Tibial artery (tissue), 4 donors: ENCODE measurements at regions of chr3 and their contacts with region 1.

Region 1: GRCh38 chr3:39907981-39908380 is 98.6 kb downstream of the MYRIP start:
- DNase-seq: no peak
- H3K4me3 ChIP-seq: no peak overlapping the region
- H3K27ac ChIP-seq: no peak overlapping the region
- H3K4me1 ChIP-seq: peaks cover 0 to 46% (median 21%) of the 10 kb centered on the region in 4 donors
- H3K27me3 ChIP-seq: no peaks in the 10 kb centered on the region
- CTCF ChIP-seq: no peak

Region 2: GRCh38 chr3:39668420-39668819 is 239.6 kb before region 1 on chr3:
- intact Hi-C with region 1: no loop called
- DNase-seq: no peak
- H3K4me3 ChIP-seq: no peak overlapping the region
- H3K27ac ChIP-seq: no peak overlapping the region
- H3K4me1 ChIP-seq: no peaks in the 10 kb centered on the region
- H3K27me3 ChIP-seq: peaks cover 0 to 3% of the 10 kb centered on the region in 2 donors
- CTCF ChIP-seq: peak in 1 of 2 experiments; percentile 32

Region 3: GRCh38 chr3:39855517-39855916 is 52.5 kb before region 1 on chr3:
- intact Hi-C with region 1: loop called (anchors 5 kb)
- DNase-seq: no peak
- H3K4me3 ChIP-seq: no peak overlapping the region
- H3K27ac ChIP-seq: no peak overlapping the region
- H3K4me1 ChIP-seq: peaks cover 0 to 6% (median 0%) of the 10 kb centered on the region in 4 donors
- H3K27me3 ChIP-seq: no peaks in the 10 kb centered on the region
- CTCF ChIP-seq: no peak

Region 4: GRCh38 chr3:40211579-40211978 is 303.6 kb after region 1 on chr3:
- intact Hi-C with region 1: no loop called
- DNase-seq: no peak
- H3K4me3 ChIP-seq: no peak overlapping the region
- H3K27ac ChIP-seq: no peak overlapping the region
- H3K4me1 ChIP-seq: no peaks in the 10 kb centered on the region
- H3K27me3 ChIP-seq: no peaks in the 10 kb centered on the region
- CTCF ChIP-seq: no peak